ENCODE measurements at regions of chr22 and their contacts with region 1.

Region 1: DNA sequence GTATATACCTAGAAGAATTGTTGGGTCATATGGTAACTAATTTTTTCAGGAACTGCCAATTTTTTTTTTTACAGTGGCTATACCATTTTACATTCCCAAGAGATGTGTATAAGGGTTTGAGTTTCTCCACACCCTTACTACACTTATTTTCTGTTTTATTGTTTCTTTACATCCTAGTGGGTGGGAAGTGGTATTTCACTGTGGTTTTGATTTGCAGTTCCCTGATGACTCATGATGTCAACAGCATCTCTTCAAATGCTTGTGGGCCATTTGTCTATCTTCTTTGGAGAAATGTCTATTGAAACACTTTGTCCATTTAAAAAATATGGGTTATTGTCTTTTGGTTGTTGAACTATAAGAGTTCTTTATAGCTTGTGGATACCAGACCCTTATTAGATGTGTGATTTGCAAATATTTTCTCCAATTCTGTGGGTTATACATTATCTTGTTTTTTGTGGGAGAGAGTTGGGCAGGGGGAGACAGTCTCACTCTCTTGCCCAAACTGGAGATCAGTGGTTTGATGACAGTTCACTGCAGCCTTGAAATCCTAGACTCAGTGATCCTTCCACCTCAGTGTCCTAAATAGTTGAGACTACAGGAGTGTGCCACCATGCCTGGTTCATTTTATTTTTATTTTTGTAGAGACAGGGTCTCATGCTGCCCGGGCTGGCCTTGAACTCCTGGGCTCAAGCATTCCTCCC is 30.3 kb upstream of the PISD start:
- DNase-seq: no peak
- ATAC-seq: no peak
- H3K4me3 ChIP-seq: no peak overlapping the region
- H3K27ac ChIP-seq: no peak overlapping the region
- H3K4me1 ChIP-seq: no peaks in the 10 kb centered on the region
- H3K27me3 ChIP-seq: no peaks in the 10 kb centered on the region
- CTCF ChIP-seq: no peak

Region 2: GRCh38 chr22:32281072-32281471 is 588.7 kb after region 1 on chr22:
- CTCF ChIA-PET with region 1: interaction called, 13 read pairs
- POLR2A ChIA-PET with region 1: no interaction called
- in situ Hi-C with region 1: no loop called
- intact Hi-C with region 1: no loop called
- DNase-seq: no peak
- ATAC-seq: no peak
- H3K4me3 ChIP-seq: no peak overlapping the region
- H3K27ac ChIP-seq: no peak overlapping the region
- H3K4me1 ChIP-seq: no peaks in the 10 kb centered on the region
- H3K27me3 ChIP-seq: no peaks in the 10 kb centered on the region; the same call in 1 of the 2 replicates
- CTCF ChIP-seq: no peak